ENCODE measurements at regions of chr3 and their contacts with region 1.

Region 1: DNA sequence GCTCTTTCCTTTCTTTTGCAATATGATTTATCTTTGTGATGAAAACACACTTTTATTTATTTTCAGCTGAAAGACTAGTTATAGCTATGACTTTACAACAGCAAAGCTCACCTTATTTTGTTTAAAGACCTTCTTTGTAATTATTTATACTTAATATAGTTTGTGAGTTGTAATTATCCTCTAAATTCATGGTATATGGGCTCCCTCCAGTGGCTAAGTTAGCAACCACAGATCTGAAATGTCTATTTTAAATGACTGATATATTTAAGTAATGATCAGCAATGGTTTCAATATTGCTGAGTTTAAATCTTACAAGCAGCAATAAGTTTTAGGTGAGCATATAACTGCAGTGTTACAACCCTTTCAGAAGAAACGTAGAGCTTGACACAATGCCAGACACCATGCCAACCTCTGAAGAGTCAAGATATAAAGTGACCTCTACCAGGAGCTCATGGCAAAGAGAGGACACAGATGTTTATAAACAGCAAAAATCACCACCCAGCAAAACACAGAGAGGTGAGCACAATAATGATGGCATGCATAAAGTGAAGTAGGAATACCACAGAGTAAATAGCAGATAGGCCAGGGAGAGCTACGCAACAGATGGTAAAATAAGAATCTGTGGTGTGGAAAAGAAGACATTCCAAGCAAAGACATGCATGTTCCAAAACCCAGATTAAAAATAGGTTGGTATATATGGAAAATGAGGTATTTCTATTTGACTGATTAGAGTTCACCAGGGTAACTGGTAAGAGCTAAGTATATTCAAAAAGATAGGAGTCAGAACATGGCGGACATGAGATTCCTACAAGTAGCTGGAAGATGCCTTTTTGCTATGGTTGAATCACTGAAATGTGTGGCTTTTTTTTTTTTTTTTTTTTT is 143.7 kb upstream of the ZNF385D start:
- DNase-seq: no peak
- H3K4me3 ChIP-seq: no peak overlapping the region
- H3K27ac ChIP-seq: no peak overlapping the region
- H3K4me1 ChIP-seq: no peaks in the 10 kb centered on the region
- H3K27me3 ChIP-seq: no peaks in the 10 kb centered on the region
- CTCF ChIP-seq: peak in 3 of 4 experiments; percentile 53 to 69 (median 57)
- POLR2A ChIP-seq: no peak

Region 2: DNA sequence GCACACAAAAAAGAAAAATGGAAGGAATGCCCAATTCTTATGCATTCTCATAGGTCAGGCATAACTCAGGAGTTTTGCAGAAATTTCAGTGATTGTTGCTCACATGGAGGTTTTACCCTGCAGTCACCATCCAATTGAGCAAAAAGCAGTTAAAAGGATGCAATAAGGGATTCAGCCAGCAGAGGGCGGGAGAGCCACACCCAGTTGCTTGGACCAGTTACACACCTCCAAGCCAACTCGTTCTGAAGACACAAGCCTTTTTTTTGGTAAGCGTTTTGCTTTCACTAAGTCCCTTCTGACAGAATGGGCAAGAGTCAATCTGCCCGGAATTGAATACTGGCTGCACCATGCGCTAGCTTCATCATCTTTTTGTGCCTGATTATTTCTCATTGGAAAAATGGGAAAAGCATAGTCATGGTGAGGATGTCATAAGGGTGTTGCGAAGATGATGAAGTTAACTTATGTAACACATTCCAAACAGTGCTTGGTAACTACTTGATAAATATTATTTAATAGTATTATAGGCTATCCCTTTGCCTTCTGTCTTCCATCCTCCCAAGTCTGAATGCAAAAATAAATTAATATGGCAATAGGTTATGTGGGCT is 1554.3 kb before region 1 on chr3:
- intact Hi-C with region 1: loop called (anchors 10 kb)
- DNase-seq: peak; percentile 59
- H3K4me3 ChIP-seq: no peak overlapping the region
- H3K27ac ChIP-seq: no peak overlapping the region
- H3K4me1 ChIP-seq: no peaks in the 10 kb centered on the region
- H3K27me3 ChIP-seq: no peaks in the 10 kb centered on the region
- CTCF ChIP-seq: peak; percentile 69 to 78 (median 74)
- POLR2A ChIP-seq: no peak

Region 3: DNA sequence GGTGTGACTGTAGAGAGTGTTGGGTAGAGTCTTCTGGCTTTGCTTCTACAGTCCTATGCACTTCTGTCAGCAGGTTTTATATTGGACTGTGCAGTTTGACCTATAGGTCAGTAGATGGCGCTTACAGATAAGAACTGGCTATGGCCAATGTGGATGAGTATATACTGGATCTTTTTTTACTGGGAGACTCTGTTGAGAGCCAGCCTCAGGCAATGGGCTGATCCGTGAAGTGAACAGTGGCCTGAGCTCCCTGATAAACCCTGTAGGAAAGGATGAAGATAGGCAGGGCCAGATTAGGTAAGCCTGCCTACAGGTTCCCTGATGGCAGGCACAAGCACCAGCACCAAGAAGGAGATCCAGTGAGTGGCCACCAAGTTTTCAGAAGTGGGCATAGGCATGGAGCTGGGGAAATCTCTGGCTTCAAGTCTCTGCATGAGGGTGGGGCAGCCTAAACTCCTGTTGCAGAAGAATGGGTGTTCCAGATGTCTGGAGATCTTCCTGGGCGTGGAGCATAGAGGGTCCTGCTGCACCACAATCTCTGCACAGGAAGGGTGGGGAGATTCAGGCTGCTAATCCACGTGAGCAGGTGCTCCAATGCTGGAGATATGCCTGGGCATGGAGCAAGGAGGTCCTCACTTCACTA is 1382.7 kb before region 1 on chr3:
- intact Hi-C with region 1: loop called (anchors 5 kb)
- DNase-seq: no peak
- H3K4me3 ChIP-seq: no peak overlapping the region
- H3K27ac ChIP-seq: no peak overlapping the region
- H3K4me1 ChIP-seq: no peaks in the 10 kb centered on the region
- H3K27me3 ChIP-seq: no peaks in the 10 kb centered on the region
- CTCF ChIP-seq: peak in 3 of 4 experiments; percentile 29 to 51 (median 32)
- POLR2A ChIP-seq: no peak

Region 4: DNA sequence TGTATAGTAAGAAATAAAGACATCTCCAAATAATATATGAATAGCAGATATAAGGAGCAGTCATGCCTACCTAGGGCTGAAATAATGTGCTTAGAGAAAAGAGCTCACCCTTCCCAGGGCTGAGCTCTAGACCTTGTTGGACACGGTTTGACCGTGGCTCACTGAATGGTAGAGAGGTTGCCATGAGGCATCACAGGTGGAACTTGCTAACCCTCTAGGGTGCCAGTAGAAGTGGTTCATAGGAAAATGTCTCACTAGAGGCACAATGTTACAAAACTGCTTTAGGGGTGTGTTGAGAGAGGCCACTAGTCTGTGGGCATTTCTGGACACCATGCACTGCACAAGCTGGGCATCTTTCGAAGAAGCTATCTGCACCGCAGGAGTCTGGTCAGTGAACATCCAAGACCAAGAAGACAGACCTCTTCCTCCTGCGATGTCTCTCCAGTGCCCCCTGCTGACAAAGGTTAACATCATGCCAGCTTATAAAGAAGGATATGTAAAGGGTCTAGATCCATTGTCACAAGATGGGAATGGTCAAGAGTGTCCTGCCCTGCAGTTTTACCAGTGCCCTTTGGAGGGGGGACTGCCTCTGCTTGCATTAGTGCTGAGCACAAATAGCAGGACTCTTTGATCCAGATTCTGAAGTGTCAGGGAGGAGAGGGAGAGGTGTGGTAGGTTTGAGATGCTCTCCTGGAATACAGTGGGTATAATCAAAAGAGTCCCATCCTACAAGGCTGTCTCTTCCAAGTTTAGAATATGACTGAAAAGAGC is 410.5 kb before region 1 on chr3:
- intact Hi-C with region 1: loop called (anchors 10 kb)
- DNase-seq: peak; percentile 8
- H3K4me3 ChIP-seq: no peak overlapping the region
- H3K27ac ChIP-seq: no peak overlapping the region
- H3K4me1 ChIP-seq: no peaks in the 10 kb centered on the region
- H3K27me3 ChIP-seq: no peaks in the 10 kb centered on the region
- CTCF ChIP-seq: peak in 3 of 4 experiments; percentile 25 to 35 (median 35)
- POLR2A ChIP-seq: no peak

Region 5: DNA sequence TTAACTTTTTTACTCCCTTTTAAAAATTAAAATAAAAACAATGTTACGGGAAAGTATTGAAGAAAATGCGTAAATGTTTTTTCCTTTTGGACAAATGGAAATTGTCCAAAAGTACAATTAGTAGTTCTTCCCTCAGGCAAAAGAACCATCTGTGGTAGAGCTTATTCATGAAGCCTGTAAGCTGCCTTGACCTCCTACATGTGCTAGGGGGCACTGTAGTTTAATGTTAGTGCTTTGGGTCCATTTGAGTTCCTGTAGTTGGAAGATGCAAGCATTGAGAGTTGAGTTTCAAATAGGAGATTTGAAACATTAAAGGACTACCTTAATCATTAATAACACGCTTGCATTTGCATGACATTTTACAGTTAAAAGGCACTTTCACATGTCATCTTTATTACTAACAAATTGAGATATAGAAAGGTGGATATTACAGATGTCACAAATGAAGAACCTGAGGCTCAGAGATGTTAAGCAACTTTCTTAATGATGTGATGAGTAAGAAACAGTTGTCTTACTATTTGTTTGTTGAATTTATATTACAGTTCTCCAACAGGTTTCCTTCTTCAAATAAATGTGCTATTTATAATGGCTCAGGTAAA is 141.9 kb before region 1 on chr3:
- intact Hi-C with region 1: loop called (anchors 5 kb)
- DNase-seq: peak; percentile 7
- H3K4me3 ChIP-seq: no peak overlapping the region
- H3K27ac ChIP-seq: no peak overlapping the region
- H3K4me1 ChIP-seq: no peaks in the 10 kb centered on the region
- H3K27me3 ChIP-seq: no peaks in the 10 kb centered on the region
- CTCF ChIP-seq: peak in 3 of 4 experiments; percentile 39 to 57 (median 44)
- POLR2A ChIP-seq: no peak

Region 6: DNA sequence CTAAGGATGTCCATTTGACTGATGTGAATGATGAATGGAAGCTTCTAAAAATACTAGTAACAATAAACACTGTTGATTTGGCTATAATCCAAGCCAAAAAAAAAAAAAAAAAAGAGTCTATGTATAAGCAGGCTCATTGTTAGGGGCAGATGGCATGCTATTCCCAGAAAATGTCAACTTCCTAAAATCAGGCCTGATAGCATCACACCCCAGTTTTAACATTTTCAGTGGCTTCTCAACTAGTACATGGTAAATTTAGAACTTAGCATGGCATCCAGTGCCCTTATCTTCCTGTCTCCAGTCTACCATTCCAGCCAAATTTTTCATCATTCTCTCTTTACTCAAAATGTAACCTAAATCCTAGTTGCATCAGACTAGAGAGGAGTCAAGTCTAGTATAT is 144.5 kb after region 1 on chr3:
- intact Hi-C with region 1: no loop called
- DNase-seq: no peak
- H3K4me3 ChIP-seq: no peak overlapping the region
- H3K27ac ChIP-seq: no peak overlapping the region
- H3K4me1 ChIP-seq: no peaks in the 10 kb centered on the region
- H3K27me3 ChIP-seq: no peaks in the 10 kb centered on the region
- CTCF ChIP-seq: no peak
- POLR2A ChIP-seq: no peak